Calu3 (cell line): ENCODE measurements at regions of chr5 and their contacts with region 1.

Region 1: GRCh38 chr5:145825751-145826180 is 9.4 kb downstream of the PRELID2 start:
- DNase-seq: peak; percentile 31
- H3K4me3 Mint-ChIP-seq: no peak overlapping the region
- H3K27ac Mint-ChIP-seq: no peak overlapping the region
- H3K4me1 Mint-ChIP-seq: peaks cover 17% of the 10 kb centered on the region
- H3K27me3 Mint-ChIP-seq: no peaks in the 10 kb centered on the region
- CTCF ChIP-seq: peak; percentile 89

Region 2: DNA sequence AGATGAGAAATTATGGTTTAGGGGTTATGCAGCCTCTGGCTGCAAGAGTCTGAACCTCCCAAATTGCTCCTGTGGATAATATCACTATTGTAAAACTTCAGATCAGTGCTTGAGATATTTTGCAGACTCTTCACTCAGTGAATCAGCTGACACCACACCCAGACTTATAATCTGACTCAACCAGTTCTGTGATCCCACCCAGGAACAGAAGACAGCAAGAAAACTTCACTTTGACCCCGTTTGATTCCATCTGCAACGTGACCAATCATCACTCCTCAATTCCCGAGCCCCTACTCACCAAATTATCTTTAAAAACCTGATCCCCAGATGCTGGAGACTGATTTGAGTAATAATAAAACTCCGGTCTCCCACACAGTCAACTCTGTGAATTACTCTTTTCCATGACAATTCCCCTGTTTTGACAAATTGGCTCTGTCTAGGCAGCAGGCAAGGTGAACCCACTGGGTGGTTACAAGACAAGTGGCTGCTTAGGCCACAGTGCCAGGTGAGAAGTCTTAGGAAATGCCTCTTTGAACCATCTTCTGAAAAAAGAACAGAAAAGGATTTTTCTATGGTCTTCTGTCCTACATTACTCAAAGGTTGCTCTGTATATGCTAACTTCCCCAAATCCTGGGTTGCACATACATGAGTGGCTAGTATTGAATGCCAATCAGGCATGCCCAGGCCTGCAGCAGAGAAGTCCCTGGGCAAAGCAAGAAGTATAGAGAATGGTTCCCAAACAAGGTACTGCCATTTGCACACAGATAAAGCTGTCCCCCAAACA is 578.6 kb before region 1 on chr5:
- CTCF ChIA-PET with region 1: no interaction called
- intact Hi-C with region 1: loop called (anchors 10 kb)
- DNase-seq: no peak
- H3K4me3 Mint-ChIP-seq: no peak overlapping the region
- H3K27ac Mint-ChIP-seq: peak overlapping the region; percentile 25
- H3K4me1 Mint-ChIP-seq: peaks cover 30% of the 10 kb centered on the region
- H3K27me3 Mint-ChIP-seq: no peaks in the 10 kb centered on the region
- CTCF ChIP-seq: no peak

Region 3: DNA sequence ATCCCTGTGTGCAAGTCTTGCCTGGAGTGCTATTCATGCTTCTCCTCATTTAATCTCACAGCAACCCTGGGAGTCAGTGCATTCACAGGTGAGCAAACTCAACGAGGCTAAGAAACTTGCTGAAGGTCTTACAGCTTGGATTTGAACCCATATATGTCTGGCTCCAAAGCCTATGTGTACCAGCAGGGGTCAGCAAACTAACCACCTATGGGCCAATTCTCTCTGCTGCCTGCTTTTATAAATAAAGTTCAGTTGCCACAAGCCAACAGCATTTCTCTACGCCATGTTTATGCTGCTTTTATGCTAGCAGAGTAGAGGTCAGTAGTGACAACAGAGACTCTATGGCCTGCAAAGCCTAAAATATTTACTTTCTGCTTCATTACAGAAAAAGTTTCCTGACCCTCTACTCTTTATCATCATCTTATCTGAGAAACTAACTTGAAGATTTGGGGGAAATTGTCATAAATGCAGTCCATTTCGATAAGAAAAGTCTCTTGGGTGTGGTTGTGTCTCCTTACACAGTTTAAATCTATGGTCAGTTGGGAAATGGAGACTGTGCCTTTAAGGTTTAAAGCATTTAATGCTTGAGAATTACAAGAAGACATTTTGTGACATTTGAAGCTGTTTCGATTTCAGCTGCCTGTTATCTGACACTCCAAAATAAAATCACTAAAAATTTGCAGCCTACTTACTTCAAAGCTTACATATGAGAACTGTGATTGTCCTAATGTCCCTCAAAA is 128.3 kb before region 1 on chr5:
- CTCF ChIA-PET with region 1: interaction called, 3 read pairs
- intact Hi-C with region 1: loop called (anchors 2 kb)
- DNase-seq: peak; percentile 54
- H3K4me3 Mint-ChIP-seq: no peak overlapping the region
- H3K27ac Mint-ChIP-seq: no peak overlapping the region
- H3K4me1 Mint-ChIP-seq: no peaks in the 10 kb centered on the region
- H3K27me3 Mint-ChIP-seq: no peaks in the 10 kb centered on the region
- CTCF ChIP-seq: peak; percentile 55

Region 4: DNA sequence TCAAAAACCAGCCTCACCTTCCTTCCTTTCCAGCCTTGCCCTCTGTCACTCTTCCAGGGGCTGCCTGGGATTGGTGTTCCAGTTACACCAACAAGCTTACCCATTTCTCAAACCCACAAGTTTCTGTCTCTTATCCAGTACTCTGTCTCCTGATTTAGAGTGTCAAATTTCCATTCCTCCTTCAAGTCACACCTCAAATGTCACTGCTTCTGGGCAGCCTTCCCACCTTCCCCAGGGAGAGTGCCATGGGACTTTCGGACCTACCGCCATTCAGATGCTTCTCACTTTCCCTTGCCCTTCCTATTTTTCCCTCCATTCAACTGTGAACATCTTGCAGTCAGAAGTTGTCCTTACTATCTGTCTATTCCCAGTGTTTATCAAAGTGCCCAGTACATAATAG is 49.0 kb after region 1 on chr5:
- CTCF ChIA-PET with region 1: no interaction called
- intact Hi-C with region 1: no loop called
- DNase-seq: no peak
- H3K4me3 Mint-ChIP-seq: no peak overlapping the region
- H3K27ac Mint-ChIP-seq: no peak overlapping the region
- H3K4me1 Mint-ChIP-seq: no peaks in the 10 kb centered on the region
- H3K27me3 Mint-ChIP-seq: no peaks in the 10 kb centered on the region
- CTCF ChIP-seq: no peak